CD8-positive, alpha-beta T cell (primary cell): ENCODE measurements at regions of chr6 and their contacts with region 1.

Region 1: GRCh38 chr6:32483968-32484636 is 44.4 kb downstream of the HLA-DRA start:
- DNase-seq: no peak
- ATAC-seq: no peak
- H3K4me3 ChIP-seq: no peak overlapping the region
- H3K4me3 Mint-ChIP-seq: no peak overlapping the region
- H3K27ac ChIP-seq: no peak overlapping the region
- H3K27ac Mint-ChIP-seq: no peak overlapping the region
- H3K4me1 ChIP-seq: no peaks in the 10 kb centered on the region
- H3K4me1 Mint-ChIP-seq: no peaks in the 10 kb centered on the region
- H3K27me3 ChIP-seq: no peaks in the 10 kb centered on the region
- H3K27me3 Mint-ChIP-seq: peaks cover 15% of the 10 kb centered on the region
- CTCF ChIP-seq: no peak

Region 2: GRCh38 chr6:32234934-32235333 is 249.2 kb before region 1 on chr6:
- CTCF ChIA-PET with region 1: no interaction called
- POLR2A ChIA-PET with region 1: no interaction called
- intact Hi-C with region 1: no loop called
- DNase-seq: peak in 2 of 9 experiments; percentile 21 to 40
- ATAC-seq: no peak
- H3K4me3 ChIP-seq: no peak overlapping the region
- H3K4me3 Mint-ChIP-seq: no peak overlapping the region
- H3K27ac ChIP-seq: no peak overlapping the region
- H3K27ac Mint-ChIP-seq: no peak overlapping the region
- H3K4me1 ChIP-seq: no peaks in the 10 kb centered on the region
- H3K4me1 Mint-ChIP-seq: peaks cover 2% of the 10 kb centered on the region
- H3K27me3 ChIP-seq: no peaks in the 10 kb centered on the region
- H3K27me3 Mint-ChIP-seq: no peaks in the 10 kb centered on the region
- CTCF ChIP-seq: no peak

Region 3: GRCh38 chr6:32539839-32540238 is 55.7 kb after region 1 on chr6:
- CTCF ChIA-PET with region 1: no interaction called
- POLR2A ChIA-PET with region 1: no interaction called
- intact Hi-C with region 1: loop called in 1 of 2 experiments (anchors 5 kb)
- DNase-seq: no peak
- ATAC-seq: no peak
- H3K4me3 ChIP-seq: no peak overlapping the region
- H3K4me3 Mint-ChIP-seq: no peak overlapping the region
- H3K27ac ChIP-seq: no peak overlapping the region
- H3K27ac Mint-ChIP-seq: no peak overlapping the region
- H3K4me1 ChIP-seq: no peaks in the 10 kb centered on the region
- H3K4me1 Mint-ChIP-seq: no peaks in the 10 kb centered on the region
- H3K27me3 ChIP-seq: no peaks in the 10 kb centered on the region
- H3K27me3 Mint-ChIP-seq: peaks cover 11% of the 10 kb centered on the region
- CTCF ChIP-seq: no peak

Region 4: DNA sequence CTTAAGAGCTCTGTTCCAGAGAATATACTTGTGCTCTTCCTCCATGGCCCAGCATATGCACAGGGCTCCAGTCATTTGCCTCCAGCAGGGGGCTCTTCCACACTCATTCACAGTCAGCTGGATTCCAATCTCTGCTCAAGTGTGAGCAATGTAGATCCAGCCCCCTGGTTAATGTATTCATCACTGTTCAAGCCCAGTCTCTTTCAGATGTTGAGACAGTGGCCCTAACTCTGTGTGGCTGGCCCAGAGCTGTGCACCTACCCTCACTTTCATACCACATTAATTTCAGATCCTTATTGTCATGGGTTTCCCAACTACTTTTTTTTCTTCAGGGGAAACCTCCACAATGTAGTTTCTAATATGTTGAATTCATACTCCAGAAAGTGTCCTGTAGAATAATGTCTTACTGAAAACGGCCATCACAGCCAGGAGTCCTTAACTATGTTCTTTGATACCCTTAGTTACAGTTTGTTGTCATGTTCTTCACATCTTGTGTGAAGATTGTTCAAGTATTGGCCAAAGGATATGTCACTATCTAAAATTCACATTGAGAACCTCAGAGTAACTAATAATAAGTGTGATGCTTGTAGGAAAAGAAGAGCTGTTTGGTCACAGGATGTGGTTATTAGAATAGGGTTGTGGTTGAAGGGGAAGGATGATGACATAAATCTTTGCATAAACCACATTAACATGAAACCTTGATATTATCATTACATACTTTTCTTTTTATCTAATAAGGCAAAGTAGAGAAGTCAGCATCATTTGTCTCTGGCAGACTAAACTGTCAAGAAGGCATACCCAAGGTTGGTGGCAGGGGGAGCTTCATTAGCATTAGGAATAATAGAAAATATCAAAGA is 138.7 kb after region 1 on chr6:
- CTCF ChIA-PET with region 1: no interaction called
- POLR2A ChIA-PET with region 1: no interaction called
- intact Hi-C with region 1: no loop called
- DNase-seq: peak; percentile 6 to 94 (median 44)
- ATAC-seq: peak; percentile 82
- H3K4me3 ChIP-seq: no peak overlapping the region
- H3K4me3 Mint-ChIP-seq: peak overlapping the region; percentile 6
- H3K27ac ChIP-seq: peak overlapping the region; percentile 60 to 89
- H3K27ac Mint-ChIP-seq: peak overlapping the region; percentile 85
- H3K4me1 ChIP-seq: peaks cover 38% of the 10 kb centered on the region
- H3K4me1 Mint-ChIP-seq: peaks cover 33% of the 10 kb centered on the region
- H3K27me3 ChIP-seq: no peaks in the 10 kb centered on the region
- H3K27me3 Mint-ChIP-seq: no peaks in the 10 kb centered on the region
- CTCF ChIP-seq: peak; percentile 47